ENCODE measurements at regions of chr12 and their contacts with region 1.

Region 1: DNA sequence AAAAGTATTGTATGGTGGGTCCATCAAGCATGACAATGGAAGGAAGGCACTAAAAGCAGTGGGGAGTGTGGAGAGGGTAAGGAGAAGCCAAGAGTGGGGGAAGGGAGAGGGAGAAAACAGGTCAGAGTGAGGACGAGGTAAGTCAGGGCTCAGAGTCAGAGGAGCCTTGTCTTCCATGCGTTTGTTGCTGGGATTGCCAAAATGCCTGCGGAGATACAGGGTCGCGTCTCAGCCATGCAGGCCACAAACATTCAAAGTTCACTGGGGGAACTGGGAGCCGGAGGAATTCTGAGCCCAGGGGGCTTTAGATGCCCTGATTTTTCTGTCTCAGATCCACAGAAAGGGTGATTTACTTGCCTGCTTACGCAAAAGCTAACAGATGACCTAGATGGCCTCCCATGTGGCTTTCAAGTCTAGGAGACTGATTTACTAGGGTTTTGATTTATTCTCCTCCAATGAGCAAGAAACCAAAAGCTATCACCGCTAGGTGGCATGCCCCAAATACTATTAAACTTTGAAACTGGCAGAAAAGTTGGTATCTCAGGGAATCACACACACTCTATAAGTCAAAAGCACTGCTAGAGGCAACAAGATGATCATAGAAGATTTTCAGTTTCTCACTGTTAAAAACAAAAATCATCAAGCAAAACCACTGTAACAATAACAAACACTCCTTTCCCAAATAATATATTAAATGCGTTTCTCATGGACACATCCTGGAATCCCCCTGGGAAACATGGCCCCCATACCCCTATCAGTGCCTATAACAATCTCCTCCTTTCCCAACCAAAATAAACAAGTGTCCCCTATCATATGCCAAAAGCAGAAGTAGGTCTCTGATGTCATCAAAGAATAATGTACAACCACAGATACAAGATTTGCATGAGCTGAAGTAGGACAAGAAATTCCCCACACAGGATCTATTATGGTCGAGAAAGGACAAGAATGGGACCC is 26.6 kb upstream of the MDM1 start:
- DNase-seq: peak; percentile 49
- H3K4me3 ChIP-seq: no peak overlapping the region
- H3K27ac ChIP-seq: no peak overlapping the region
- H3K4me1 ChIP-seq: no peaks in the 10 kb centered on the region; a peak in 2 of 4 replicates
- H3K27me3 ChIP-seq: no peaks in the 10 kb centered on the region
- CTCF ChIP-seq: peak; percentile 84
- EP300 ChIP-seq: no peak
- RAD21 ChIP-seq: peak; percentile 85

Region 2: DNA sequence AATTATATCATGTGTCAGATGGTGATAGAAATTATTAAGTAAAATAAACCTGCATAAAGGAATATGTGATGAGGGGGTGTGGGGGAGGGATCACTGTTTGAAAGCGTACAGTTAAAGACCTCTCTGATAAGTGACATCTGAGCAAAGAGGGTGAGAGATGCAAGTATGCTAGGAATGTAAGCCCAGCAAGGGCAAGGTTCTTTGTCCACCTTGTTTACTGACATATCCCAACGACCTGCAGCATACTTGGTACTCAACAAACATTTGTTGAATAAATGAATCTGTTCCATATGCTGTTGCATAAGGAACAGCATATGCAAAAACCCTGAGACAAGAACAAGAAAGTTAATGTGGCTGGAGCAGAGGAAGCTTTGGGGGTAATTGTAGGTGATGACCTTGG is 14.7 kb before region 1 on chr12:
- CTCF ChIA-PET with region 1: interaction called, 23 read pairs
- POLR2A ChIA-PET with region 1: no interaction called
- DNase-seq: no peak
- H3K4me3 ChIP-seq: no peak overlapping the region
- H3K27ac ChIP-seq: no peak overlapping the region
- H3K4me1 ChIP-seq: no peaks in the 10 kb centered on the region; a peak in 1 of 4 replicates
- H3K27me3 ChIP-seq: no peaks in the 10 kb centered on the region
- CTCF ChIP-seq: no peak
- EP300 ChIP-seq: no peak
- RAD21 ChIP-seq: no peak

Region 3: DNA sequence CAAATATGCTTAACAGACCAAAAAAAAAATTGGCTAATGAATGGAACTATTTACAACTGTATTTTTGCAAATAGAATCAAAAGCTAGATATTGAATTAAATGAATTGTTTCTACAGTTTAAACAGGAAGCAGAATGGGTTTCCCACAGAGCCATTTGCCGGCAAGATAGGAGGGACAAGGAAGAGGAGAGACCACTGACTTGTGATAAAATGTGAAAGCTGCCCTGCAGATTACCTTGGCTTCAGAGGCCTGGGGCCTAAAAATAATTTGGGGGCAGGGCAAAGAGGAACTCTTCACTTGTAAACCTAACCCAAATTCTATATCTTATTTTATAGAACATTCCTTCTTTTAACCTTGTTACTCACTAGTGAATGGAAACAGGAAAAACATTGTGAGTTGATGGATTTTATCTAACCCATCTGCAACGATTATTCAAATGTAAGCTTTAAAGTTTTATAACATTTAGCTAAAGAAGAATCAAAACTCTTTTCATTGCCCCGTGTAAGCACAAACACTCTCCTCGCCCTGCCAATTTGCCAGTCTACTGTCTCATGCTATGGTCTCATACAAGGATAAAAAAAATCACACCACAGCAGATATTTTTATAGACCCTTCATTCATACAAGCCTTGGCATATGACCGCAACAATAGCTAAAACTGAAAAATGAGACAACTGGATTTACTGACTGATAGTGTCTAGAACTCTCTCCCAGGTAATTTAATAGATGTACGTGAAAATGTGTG is 22.8 kb after region 1 on chr12:
- CTCF ChIA-PET with region 1: no interaction called
- POLR2A ChIA-PET with region 1: no interaction called
- DNase-seq: no peak
- H3K4me3 ChIP-seq: no peak overlapping the region
- H3K27ac ChIP-seq: no peak overlapping the region
- H3K4me1 ChIP-seq: no peaks in the 10 kb centered on the region
- H3K27me3 ChIP-seq: no peaks in the 10 kb centered on the region
- CTCF ChIP-seq: no peak
- EP300 ChIP-seq: no peak
- RAD21 ChIP-seq: no peak

Measured in SK-N-SH (cell line).